Activated CD8-positive, alpha-beta T cell treated with anti-CD3 and anti-CD28 coated beads, Interleukin-2, amount 10 ng/mL, durations not matched to agents 7 days and 5 days (primary cell): ENCODE measurements at regions of chr11 and their contacts with region 1.

Region 1: DNA sequence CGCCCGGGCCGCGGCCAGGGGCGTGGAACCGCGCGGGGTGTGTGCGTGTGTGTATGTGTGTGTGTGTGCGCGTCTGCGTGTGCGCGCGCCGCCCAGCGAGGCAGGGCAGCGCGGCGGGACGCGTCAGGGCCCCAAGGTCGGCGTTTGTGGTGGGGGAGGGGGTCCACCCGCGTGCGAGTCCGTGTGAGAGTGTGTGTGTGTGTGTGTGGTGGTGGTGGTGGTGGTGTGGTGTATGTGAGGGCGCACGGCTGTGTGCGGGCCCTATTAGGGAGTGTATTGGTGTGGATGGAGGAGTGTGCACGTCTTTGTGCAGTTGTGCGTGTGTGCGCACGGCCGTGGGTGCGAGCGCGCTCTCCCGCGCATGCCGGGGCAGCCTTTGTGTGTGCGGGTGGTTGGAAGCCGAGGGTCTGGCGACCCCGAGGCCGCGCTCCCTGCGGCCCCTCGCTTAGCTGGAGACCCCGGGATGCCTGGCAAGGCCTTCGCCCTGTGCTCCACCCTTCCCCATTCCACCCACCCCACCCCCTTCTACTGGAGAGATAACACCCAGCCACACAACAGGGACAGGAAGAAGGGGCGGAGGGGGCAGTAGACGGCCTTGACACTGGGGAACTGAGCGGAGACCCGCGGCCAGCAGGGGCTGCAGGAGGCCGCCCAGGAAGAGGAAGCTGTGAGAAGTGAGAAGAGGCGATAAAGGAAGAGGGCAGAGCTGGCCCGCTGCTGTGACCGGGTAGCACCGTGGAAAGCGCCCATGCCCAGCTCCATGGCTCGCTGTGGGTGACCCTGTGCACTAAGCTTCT is 528 bp upstream of the ARRB1 start:
- DNase-seq: peak; percentile 77
- ATAC-seq: peak; percentile 62
- H3K4me3 Mint-ChIP-seq: peak overlapping the region; percentile 87
- H3K27ac Mint-ChIP-seq: peak overlapping the region; percentile 94
- H3K4me1 Mint-ChIP-seq: peaks cover 60% of the 10 kb centered on the region
- H3K27me3 Mint-ChIP-seq: no peaks in the 10 kb centered on the region

Region 2: GRCh38 chr11:75328426-75329277 is 23.3 kb before region 1 on chr11:
- CTCF ChIA-PET with region 1: interaction called, 11 read pairs
- POLR2A ChIA-PET with region 1: interaction called, 7 read pairs
- DNase-seq: peak; percentile 87
- ATAC-seq: peak; percentile 89
- H3K4me3 Mint-ChIP-seq: peak overlapping the region; percentile 47
- H3K27ac Mint-ChIP-seq: peak overlapping the region; percentile 94
- H3K4me1 Mint-ChIP-seq: peaks cover 78% of the 10 kb centered on the region
- H3K27me3 Mint-ChIP-seq: no peaks in the 10 kb centered on the region

Region 3: DNA sequence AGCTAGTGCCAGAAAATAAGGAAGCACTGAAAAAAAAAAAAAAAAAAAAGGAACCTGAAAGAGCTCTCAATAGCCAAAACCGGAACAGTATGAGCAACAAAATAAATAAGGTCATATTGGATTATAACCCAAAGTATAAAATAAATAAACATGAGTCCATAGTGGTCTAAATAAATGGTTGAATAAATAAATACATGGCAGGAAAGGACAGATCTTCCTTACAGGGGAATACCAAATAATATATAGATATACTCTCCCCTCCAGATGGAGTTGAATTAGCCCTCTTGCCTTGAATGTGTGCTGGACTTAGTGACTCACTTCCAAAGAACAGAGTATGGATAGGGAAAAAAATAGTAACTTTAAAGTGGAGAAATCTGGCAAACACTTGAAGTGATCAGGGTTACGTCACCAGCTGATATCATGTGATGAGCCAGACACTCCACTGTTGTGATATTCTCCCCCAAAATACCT is 13.8 kb after region 1 on chr11:
- CTCF ChIA-PET with region 1: interaction called, 11 read pairs
- POLR2A ChIA-PET with region 1: interaction called, 7 read pairs
- DNase-seq: no peak
- ATAC-seq: no peak
- H3K4me3 Mint-ChIP-seq: no peak overlapping the region
- H3K27ac Mint-ChIP-seq: no peak overlapping the region
- H3K4me1 Mint-ChIP-seq: peaks cover 28% of the 10 kb centered on the region
- H3K27me3 Mint-ChIP-seq: no peaks in the 10 kb centered on the region

Region 4: GRCh38 chr11:75554258-75555022 is 202.5 kb after region 1 on chr11:
- CTCF ChIA-PET with region 1: no interaction called
- POLR2A ChIA-PET with region 1: no interaction called
- DNase-seq: no peak
- ATAC-seq: no peak
- H3K4me3 Mint-ChIP-seq: no peak overlapping the region
- H3K27ac Mint-ChIP-seq: no peak overlapping the region
- H3K4me1 Mint-ChIP-seq: peaks cover under 1% of the 10 kb centered on the region
- H3K27me3 Mint-ChIP-seq: no peaks in the 10 kb centered on the region